ENCODE measurements at regions of chr17 and their contacts with region 1.

Region 1: DNA sequence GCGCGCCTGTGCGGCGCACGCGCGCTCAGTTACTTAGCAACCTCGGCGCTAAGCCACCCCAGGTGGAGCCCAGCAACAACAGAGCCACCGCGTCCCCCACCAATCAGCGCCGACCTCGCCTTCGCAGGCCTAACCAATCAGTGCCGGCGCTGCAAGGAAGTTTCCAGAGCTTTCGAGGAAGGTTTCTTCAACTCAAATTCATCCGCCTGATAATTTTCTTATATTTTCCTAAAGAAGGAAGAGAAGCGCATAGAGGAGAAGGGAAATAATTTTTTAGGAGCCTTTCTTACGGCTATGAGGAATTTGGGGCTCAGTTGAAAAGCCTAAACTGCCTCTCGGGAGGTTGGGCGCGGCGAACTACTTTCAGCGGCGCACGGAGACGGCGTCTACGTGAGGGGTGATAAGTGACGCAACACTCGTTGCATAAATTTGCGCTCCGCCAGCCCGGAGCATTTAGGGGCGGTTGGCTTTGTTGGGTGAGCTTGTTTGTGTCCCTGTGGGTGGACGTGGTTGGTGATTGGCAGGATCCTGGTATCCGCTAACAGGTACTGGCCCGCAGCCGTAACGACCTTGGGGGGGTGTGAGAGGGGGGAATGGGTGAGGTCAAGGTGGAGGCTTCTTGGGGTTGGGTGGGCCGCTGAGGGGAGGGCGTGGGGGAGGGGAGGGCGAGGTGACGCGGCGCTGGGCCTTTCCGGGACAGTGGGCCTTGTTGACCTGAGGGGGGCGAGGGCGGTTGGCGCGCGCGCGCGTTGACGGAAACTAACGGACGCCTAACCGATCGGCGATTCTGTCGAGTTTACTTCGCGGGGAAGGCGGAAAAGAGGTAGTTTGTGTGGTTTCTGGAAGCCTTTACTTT is at the start of gene UBB:
- DNase-seq: peak; percentile 83
- ATAC-seq: peak; percentile 90
- H3K4me3 Mint-ChIP-seq: peak within 1 kb of the TSS; percentile 97
- H3K27ac Mint-ChIP-seq: peak within 1 kb of the TSS; percentile 97
- H3K4me1 Mint-ChIP-seq: peaks cover 48% of the 10 kb centered on the region
- H3K27me3 Mint-ChIP-seq: no peaks in the 10 kb centered on the region
- CTCF ChIP-seq: no peak
- total RNA-seq, gene UBB: 1,031 and 1,128 TPM in 2 replicates

Region 2: DNA sequence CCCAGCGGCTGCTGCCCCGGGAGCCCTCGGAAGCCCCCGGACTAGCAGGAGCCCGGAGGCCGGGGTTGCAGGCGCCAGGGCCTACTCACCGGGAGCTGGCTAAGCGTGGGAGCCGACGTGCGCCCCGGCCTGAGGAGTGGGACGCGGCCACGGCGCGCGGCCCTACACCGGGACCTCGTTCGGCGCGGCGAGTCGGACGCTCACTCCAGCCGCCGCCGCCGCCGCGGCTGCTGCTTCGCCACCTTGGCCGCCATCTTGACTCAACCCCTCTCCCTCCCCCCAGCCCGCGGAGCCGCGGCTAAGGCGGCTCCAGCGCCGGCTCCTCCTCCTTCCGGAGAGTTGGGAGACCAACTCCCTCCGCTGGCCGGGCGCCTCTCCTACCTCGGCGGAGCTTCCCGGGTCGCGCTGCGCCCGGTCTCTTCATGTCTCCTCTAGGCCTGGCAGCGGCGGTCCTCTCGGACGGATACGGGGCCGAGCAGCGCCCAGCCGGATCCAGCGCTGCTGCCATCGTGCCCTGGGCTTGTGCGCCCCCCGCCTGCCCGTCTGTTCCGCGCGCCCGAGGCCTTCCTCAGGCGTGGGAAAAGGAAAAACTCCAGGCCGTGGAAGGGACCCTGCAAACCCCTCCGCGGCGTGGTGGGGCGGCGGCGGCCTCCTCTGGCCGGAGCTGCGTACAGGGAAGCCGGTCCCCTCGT is 165.4 kb before region 1 on chr17 and contains the start of gene NCOR1:
- CTCF ChIA-PET with region 1: no interaction called
- POLR2A ChIA-PET with region 1: interaction called, 12 read pairs
- intact Hi-C with region 1: no loop called
- DNase-seq: peak; percentile 83
- ATAC-seq: peak; percentile 86
- H3K4me3 Mint-ChIP-seq: peak within 1 kb of the TSS; percentile 98
- H3K27ac Mint-ChIP-seq: peak within 1 kb of the TSS; percentile 86
- H3K4me1 Mint-ChIP-seq: peaks cover 50% of the 10 kb centered on the region
- H3K27me3 Mint-ChIP-seq: no peaks in the 10 kb centered on the region
- CTCF ChIP-seq: no peak
- total RNA-seq, gene NCOR1: 163 and 188 TPM in 2 replicates

Region 3: GRCh38 chr17:16353317-16354174 is 27.3 kb before region 1 on chr17 and contains the start of gene CENPV:
- CTCF ChIA-PET with region 1: no interaction called
- POLR2A ChIA-PET with region 1: interaction called, 16 read pairs
- intact Hi-C with region 1: loop called (anchors 1 kb)
- DNase-seq: peak; percentile 73
- ATAC-seq: peak; percentile 82
- H3K4me3 Mint-ChIP-seq: peak within 1 kb of the TSS; percentile 90
- H3K27ac Mint-ChIP-seq: peak within 1 kb of the TSS; percentile 71
- H3K4me1 Mint-ChIP-seq: peaks cover 18% of the 10 kb centered on the region
- H3K27me3 Mint-ChIP-seq: no peaks in the 10 kb centered on the region
- CTCF ChIP-seq: no peak
- total RNA-seq, gene CENPV: 24.0 and 25.7 TPM in 2 replicates

Region 4: GRCh38 chr17:16415031-16415924 is 34.4 kb after region 1 on chr17 and contains the start of gene TRPV2:
- CTCF ChIA-PET with region 1: interaction called, 29 read pairs
- POLR2A ChIA-PET with region 1: interaction called, 105 read pairs
- intact Hi-C with region 1: loop called (anchors 1 kb)
- DNase-seq: peak; percentile 51
- ATAC-seq: peak; percentile 41
- H3K4me3 Mint-ChIP-seq: peak within 1 kb of the TSS; percentile 95
- H3K27ac Mint-ChIP-seq: peak within 1 kb of the TSS; percentile 97
- H3K4me1 Mint-ChIP-seq: peaks cover 41% of the 10 kb centered on the region
- H3K27me3 Mint-ChIP-seq: no peaks in the 10 kb centered on the region
- CTCF ChIP-seq: no peak
- total RNA-seq, gene TRPV2: 58.3 and 65.8 TPM in 2 replicates

Region 5: DNA sequence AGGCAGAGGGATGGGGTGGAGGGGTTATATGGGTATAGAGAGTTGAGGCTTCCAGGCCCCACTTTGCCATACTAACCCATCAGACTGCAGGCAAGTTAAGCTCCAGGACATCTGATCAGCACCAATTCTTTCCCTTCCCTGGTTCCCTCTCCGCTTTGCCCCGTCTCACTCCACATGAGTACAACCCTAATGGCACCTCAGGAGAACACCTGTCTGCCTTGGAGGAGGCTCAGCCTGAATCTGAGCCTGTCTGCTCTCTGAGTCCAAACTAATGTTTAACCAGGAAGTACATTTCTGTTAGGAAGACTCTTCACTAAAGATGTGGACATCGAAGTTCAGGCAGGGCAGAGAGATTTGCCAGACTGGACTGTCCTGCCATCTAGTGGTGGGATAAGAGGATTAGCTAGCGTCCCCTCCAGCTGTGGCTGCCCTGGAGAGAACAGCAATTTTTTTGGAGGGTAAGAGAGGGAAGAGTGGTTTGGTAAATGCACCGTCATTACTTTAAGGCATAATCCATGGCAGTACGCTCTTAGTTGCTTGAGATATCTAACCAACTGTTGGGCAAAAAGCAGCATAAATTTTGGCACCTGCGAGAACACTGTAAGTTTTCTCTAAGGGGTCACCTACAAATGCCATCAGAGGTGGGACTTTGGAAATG is 140.3 kb after region 1 on chr17:
- CTCF ChIA-PET with region 1: interaction called, 7 read pairs
- POLR2A ChIA-PET with region 1: interaction called, 3 read pairs
- intact Hi-C with region 1: loop called (anchors 1 kb)
- DNase-seq: peak; percentile 19
- ATAC-seq: peak; percentile 94
- H3K4me3 Mint-ChIP-seq: no peak overlapping the region
- H3K27ac Mint-ChIP-seq: no peak overlapping the region
- H3K4me1 Mint-ChIP-seq: peaks cover 6% of the 10 kb centered on the region
- H3K27me3 Mint-ChIP-seq: peaks cover 36% of the 10 kb centered on the region
- CTCF ChIP-seq: peak; percentile 31

Region 6: DNA sequence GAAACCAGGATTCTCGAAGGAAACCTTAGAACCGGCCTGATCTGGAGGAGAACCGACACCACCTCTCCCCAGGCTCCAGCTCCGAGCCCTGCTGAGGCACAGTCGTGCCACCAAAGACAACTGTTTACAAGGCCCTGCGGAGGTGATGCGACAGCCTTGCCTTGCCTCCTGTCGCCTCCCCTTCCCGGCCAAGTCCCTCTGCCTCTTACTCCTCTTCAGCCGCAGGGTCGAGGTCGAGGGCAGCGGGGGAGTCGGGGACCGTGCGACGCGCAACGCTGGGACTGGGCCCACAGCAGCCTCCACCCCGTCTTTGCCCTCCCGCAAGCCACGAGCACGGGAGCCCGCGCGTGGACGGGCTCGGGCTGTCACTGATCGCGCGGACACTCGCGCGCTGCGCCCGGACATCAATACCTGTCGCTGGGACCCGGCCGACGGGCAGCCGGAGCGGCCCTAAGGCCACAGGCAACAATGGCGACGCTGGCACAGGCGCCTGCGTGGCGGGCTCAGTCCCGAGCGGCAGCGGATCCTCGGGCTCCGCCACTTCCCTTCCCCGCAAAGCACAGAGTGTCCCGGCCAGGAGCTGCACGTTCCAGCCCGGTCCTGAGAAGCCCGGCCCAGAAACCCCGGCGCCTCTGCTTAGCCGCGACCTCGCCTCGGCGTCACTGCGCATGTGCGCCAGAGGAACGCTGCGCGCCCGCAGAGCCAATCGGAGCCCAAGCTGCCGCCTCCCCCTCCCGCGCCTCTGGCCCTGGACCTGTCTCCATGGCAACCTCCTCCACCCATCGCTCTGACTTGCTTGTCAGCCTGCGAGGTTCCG is 187.9 kb after region 1 on chr17 and contains the start of gene ZNF287:
- CTCF ChIA-PET with region 1: no interaction called
- POLR2A ChIA-PET with region 1: interaction called, 6 read pairs
- intact Hi-C with region 1: loop called (anchors 1 kb)
- DNase-seq: peak; percentile 89
- ATAC-seq: peak; percentile 97
- H3K4me3 Mint-ChIP-seq: peak within 1 kb of the TSS; percentile 88
- H3K27ac Mint-ChIP-seq: peak within 1 kb of the TSS; percentile 94
- H3K4me1 Mint-ChIP-seq: peaks cover 14% of the 10 kb centered on the region
- H3K27me3 Mint-ChIP-seq: no peaks in the 10 kb centered on the region
- CTCF ChIP-seq: no peak
- total RNA-seq, gene ZNF287: 14.3 and 15.4 TPM in 2 replicates

Region 7: DNA sequence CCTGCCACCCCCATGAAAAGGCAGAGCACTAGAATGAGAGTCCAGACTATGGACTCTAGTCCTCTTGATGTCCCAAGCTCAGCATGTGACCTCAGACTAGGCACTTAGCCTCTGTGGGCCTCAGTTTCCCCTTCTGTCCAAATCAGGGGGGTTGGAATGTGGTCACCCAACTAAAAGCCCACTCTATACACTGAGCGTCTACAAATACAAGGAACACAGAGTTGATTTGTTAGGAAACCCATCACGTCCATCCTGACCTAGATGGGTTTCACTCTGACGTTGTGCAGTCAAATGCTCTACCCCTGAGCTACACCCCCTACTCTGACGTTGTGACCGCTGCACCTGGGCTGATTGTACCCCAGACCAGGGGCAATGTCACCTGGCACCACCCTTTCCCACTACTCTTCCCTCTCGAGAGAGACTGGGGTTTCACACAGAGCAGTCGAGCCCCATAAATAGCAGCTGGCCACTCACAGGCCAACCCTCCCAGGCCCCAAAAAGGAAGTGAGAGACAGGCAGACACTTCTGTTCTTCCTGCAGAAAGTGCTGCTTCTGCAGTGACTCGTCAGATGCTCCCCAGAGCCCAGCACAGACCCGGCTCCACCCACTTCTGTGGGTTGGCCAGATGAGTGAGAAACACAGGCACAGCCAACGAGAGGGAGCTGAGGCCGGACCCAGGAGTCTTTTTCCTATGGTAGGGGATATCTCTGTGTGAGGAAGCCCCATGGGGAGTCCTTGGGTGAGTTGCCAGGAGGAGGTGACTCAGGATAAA is 607.1 kb after region 1 on chr17:
- CTCF ChIA-PET with region 1: no interaction called
- POLR2A ChIA-PET with region 1: no interaction called
- intact Hi-C with region 1: loop called (anchors 10 kb)
- DNase-seq: peak; percentile 78
- ATAC-seq: peak; percentile 80
- H3K4me3 Mint-ChIP-seq: peak overlapping the region; percentile 84
- H3K27ac Mint-ChIP-seq: peak overlapping the region; percentile 97
- H3K4me1 Mint-ChIP-seq: peaks cover 78% of the 10 kb centered on the region
- H3K27me3 Mint-ChIP-seq: no peaks in the 10 kb centered on the region
- CTCF ChIP-seq: no peak

Measured in activated B cell treated with CpG ODN at 0.5 μM for 24 hours (primary cell).